Natural killer cell (primary cell): ENCODE measurements at regions of chr13 and their contacts with region 1.

Region 1: DNA sequence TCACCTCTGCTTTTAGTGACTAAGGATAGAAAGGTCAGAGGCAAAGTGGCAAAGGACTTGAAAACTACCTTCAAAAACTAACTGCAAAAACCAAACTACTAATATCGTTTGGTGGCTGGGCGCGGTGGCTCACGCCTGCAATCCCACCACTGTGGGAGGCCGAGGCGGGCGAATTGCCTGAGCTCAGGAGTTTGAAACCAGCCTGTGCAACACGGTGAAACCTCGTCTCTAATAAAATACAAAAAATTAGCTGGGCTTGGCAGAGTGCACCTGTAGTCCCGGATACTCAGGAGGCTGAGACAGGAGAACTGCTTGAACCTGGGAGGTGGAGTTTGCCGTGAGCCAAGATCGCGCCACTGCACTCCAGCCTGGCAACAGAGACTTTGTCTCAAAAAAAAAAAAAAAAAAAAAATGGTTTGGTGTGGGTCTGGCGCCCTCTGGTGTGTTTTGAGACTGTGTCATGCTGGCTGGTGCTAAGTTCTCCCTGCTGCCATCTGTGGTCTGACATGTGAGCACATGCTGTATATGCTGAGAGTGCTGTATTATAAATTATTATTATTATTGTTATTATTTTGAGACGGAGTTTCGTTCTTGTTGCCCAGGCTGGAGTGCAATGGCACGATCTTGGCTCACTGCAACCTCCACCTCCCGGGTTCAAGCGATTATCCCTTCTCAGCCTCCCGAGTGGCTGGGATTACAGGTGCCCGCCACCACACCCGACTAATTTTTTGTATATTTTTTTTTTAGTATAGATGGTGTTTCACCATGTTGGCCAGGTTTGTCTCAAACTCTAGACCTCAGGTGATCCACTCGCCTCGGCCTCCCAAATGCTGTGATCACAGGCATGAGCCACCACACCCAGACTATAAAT is 36.0 kb upstream of the RNF17 start:
- DNase-seq: peak; percentile 58 to 92
- ATAC-seq: peak; percentile 97 to 100 (median 99)
- H3K4me3 ChIP-seq: no peak overlapping the region
- H3K4me3 Mint-ChIP-seq: no peak overlapping the region
- H3K27ac ChIP-seq: no peak overlapping the region
- H3K27ac Mint-ChIP-seq: no peak overlapping the region
- H3K4me1 ChIP-seq: peaks cover 3% of the 10 kb centered on the region
- H3K4me1 Mint-ChIP-seq: no peaks in the 10 kb centered on the region
- H3K27me3 ChIP-seq: no peaks in the 10 kb centered on the region
- H3K27me3 Mint-ChIP-seq: peaks cover 9 to 15% of the 10 kb centered on the region in 2 donors
- CTCF ChIP-seq: peak; percentile 93

Region 2: GRCh38 chr13:24512197-24512907 is 215.6 kb before region 1 on chr13 and contains the start of gene PARP4:
- intact Hi-C with region 1: loop called (anchors 5 kb)
- DNase-seq: peak; percentile 65 to 82
- ATAC-seq: peak; percentile 71 to 86 (median 80)
- H3K4me3 ChIP-seq: peak within 1 kb of the TSS; percentile 96
- H3K4me3 Mint-ChIP-seq: peak within 1 kb of the TSS; percentile 97
- H3K27ac ChIP-seq: peak within 1 kb of the TSS; percentile 93
- H3K27ac Mint-ChIP-seq: peak within 1 kb of the TSS; percentile 92
- H3K4me1 ChIP-seq: peaks cover 12% of the 10 kb centered on the region
- H3K4me1 Mint-ChIP-seq: peaks cover 37 to 54% of the 10 kb centered on the region in 2 donors
- H3K27me3 ChIP-seq: no peaks in the 10 kb centered on the region
- H3K27me3 Mint-ChIP-seq: no peaks in the 10 kb centered on the region
- CTCF ChIP-seq: no peak
- total RNA-seq, gene PARP4: 83.5 to 90.1 (median 84.0) TPM

Region 3: DNA sequence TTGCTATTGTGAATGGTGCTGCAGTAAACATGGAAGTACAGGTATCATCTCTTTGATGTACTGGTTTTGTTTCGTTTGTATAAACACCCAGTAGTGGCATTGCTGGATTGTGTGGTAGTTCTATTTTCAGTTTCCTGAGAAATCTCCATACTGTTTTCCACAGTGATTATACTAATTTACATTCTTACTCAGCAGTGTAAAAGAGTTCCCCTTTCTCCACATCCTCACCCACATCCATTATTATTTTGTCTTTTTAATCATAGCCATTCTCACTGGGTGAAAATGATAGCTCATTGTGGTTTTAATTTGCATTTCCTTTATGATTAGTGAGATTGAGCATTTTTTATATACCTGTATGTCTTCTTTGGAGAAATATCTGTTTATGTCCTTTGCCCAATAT is 153.1 kb before region 1 on chr13:
- intact Hi-C with region 1: loop called (anchors 1 kb)
- DNase-seq: no peak
- ATAC-seq: no peak
- H3K4me3 ChIP-seq: no peak overlapping the region
- H3K4me3 Mint-ChIP-seq: no peak overlapping the region
- H3K27ac ChIP-seq: no peak overlapping the region
- H3K27ac Mint-ChIP-seq: no peak overlapping the region
- H3K4me1 ChIP-seq: no peaks in the 10 kb centered on the region
- H3K4me1 Mint-ChIP-seq: peaks cover 4 to 5% of the 10 kb centered on the region in 2 donors
- H3K27me3 ChIP-seq: no peaks in the 10 kb centered on the region
- H3K27me3 Mint-ChIP-seq: peaks cover 2 to 7% of the 10 kb centered on the region in 2 donors
- CTCF ChIP-seq: no peak

Region 4: DNA sequence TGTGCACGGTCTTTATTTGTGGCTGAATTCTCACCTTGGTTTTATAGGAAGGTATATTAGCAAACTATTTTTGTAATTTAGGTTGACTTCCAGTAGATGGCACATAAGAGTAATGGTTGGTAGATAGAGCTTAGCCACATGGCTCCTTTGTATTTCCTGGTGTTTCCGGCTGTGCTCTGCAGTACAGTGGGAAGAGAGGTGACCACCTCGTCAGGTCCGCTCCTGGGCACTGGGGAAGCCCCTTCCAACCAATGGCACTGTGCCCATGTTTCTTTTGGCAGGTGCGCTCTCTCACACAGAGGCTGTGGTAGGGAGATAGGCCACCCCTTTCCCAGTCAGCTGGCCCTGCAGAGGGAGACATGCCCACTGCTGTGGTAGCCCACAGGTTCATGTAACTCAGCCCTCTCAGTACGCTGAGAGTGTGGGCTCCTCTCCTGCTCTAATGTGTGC is 122.0 kb before region 1 on chr13:
- intact Hi-C with region 1: loop called (anchors 10 kb)
- DNase-seq: no peak
- ATAC-seq: peak in 1 of 3 donors; percentile 87
- H3K4me3 ChIP-seq: no peak overlapping the region
- H3K4me3 Mint-ChIP-seq: no peak overlapping the region
- H3K27ac ChIP-seq: no peak overlapping the region
- H3K27ac Mint-ChIP-seq: peak overlapping the region in 1 of 2 donors; percentile 66
- H3K4me1 ChIP-seq: no peaks in the 10 kb centered on the region
- H3K4me1 Mint-ChIP-seq: peaks cover 3 to 16% of the 10 kb centered on the region in 2 donors
- H3K27me3 ChIP-seq: no peaks in the 10 kb centered on the region
- H3K27me3 Mint-ChIP-seq: peaks cover 0 to 7% of the 10 kb centered on the region in 2 donors
- CTCF ChIP-seq: peak; percentile 37

Region 5: DNA sequence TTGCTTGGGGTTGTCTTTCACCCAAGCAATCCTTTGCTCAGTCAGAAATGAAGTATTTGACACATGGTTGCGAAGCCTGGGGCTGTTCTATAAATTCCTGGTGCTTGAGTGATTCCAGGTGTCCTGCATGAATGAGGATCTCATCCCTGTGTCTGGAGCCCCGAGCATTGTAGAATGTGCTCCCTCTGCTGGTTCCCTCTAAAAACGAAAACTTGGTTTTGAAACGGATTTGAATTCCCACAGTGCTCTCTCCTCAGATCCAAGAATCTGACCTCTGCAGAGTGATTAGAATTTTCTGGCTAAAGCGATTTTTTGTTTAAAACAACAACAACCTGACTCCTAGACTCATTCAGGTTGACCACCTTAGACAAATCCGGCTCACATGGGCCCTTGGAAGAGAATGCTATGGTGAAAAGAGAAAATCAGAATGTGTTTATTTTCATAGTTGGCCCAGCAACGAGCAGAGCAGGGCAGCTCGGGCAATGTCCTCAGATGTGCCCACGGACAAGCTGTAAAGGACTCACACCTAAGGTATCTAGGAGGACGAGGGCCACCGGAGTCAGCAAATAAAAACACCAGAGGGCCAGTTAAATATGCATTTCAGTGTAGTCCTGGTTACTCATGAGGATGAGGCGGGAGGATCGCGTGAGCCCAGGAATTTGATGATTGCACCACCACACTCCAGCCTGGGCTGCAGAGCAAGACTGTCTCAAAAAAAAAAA is 56.4 kb before region 1 on chr13:
- intact Hi-C with region 1: loop called (anchors 5 kb)
- DNase-seq: peak in 1 of 2 donors; percentile 61
- ATAC-seq: peak in 2 of 3 donors; percentile 50 to 55
- H3K4me3 ChIP-seq: no peak overlapping the region
- H3K4me3 Mint-ChIP-seq: peak overlapping the region; percentile 4
- H3K27ac ChIP-seq: no peak overlapping the region
- H3K27ac Mint-ChIP-seq: no peak overlapping the region
- H3K4me1 ChIP-seq: peaks cover 16% of the 10 kb centered on the region
- H3K4me1 Mint-ChIP-seq: peaks cover 10 to 15% of the 10 kb centered on the region in 2 donors
- H3K27me3 ChIP-seq: no peaks in the 10 kb centered on the region
- H3K27me3 Mint-ChIP-seq: peaks cover 6 to 21% of the 10 kb centered on the region in 2 donors
- CTCF ChIP-seq: peak; percentile 74

Region 6: DNA sequence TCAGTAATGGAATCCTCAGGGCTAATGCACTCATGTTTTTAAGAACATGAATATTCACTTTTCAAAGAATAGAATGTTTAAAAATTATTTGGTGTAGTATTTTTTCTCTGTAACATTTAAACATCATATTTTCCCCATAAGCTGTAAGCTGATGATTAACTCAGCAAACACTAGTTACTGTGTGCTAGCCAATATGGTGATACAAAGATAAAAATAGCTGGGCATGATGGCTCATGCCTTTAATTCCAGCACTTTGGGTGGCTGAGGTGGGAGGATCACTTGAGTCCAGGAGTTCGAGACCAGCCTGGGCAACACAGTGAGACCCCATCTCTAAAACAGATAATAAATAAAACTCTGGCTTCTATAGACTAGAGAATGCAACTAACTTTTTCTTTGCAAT is 49.2 kb after region 1 on chr13:
- intact Hi-C with region 1: no loop called
- DNase-seq: no peak
- ATAC-seq: no peak
- H3K4me3 ChIP-seq: no peak overlapping the region
- H3K4me3 Mint-ChIP-seq: no peak overlapping the region
- H3K27ac ChIP-seq: no peak overlapping the region
- H3K27ac Mint-ChIP-seq: no peak overlapping the region
- H3K4me1 ChIP-seq: no peaks in the 10 kb centered on the region
- H3K4me1 Mint-ChIP-seq: no peaks in the 10 kb centered on the region
- H3K27me3 ChIP-seq: no peaks in the 10 kb centered on the region
- H3K27me3 Mint-ChIP-seq: peaks cover 0 to 6% of the 10 kb centered on the region in 2 donors
- CTCF ChIP-seq: no peak